GM12878 (cell line): ENCODE measurements at regions of chr1 and their contacts with region 1.

Region 1: GRCh38 chr1:68120136-68120791 is 69.8 kb upstream of the DIRAS3 start:
- DNase-seq: peak; percentile 24
- ATAC-seq: peak; percentile 81
- H3K4me3 ChIP-seq: no peak overlapping the region
- H3K27ac ChIP-seq: no peak overlapping the region
- H3K4me1 ChIP-seq: no peaks in the 10 kb centered on the region
- H3K27me3 ChIP-seq: no peaks in the 10 kb centered on the region
- CTCF ChIP-seq: peak; percentile 69 to 82 (median 75)
- EP300 ChIP-seq: no peak
- POLR2A ChIP-seq: no peak
- RAD21 ChIP-seq: peak; percentile 91

Region 2: DNA sequence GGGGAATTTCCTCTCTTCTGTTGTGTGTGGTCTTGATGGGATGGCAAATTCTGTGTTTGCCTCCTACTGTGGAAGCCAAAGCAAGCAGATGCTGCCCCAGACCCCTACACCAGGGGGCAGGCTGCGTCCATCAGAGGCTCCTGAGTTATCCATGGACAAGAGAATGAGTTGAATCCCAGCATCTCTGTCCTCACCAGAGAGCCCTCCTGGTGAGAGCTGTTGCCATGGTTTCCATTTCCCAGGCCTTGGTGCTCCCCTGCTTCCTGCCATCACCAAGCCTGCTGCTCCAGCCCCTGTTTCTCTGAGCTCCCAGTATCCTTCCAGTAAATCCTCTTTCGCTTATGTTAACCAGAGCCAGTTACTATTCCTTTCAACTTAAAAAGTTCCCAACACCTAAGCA is 266.6 kb before region 1 on chr1:
- CTCF ChIA-PET with region 1: interaction called, 29 read pairs
- POLR2A ChIA-PET with region 1: no interaction called
- RAD21 ChIA-PET with region 1: interaction called, 17 read pairs
- SMC1A ChIA-PET with region 1: interaction called, 26 read pairs
- in situ Hi-C with region 1: no loop called
- intact Hi-C with region 1: loop called (anchors 5 kb)
- DNase-seq: no peak
- ATAC-seq: peak; percentile 82
- H3K4me3 ChIP-seq: no peak overlapping the region
- H3K27ac ChIP-seq: no peak overlapping the region
- H3K4me1 ChIP-seq: no peaks in the 10 kb centered on the region
- H3K27me3 ChIP-seq: no peaks in the 10 kb centered on the region
- CTCF ChIP-seq: peak; percentile 51 to 72 (median 52)
- EP300 ChIP-seq: no peak
- POLR2A ChIP-seq: no peak
- RAD21 ChIP-seq: peak; percentile 41

Region 3: GRCh38 chr1:68141071-68142021 is 21.1 kb after region 1 on chr1:
- CTCF ChIA-PET with region 1: interaction called, 21 read pairs
- POLR2A ChIA-PET with region 1: no interaction called
- RAD21 ChIA-PET with region 1: interaction called, 3 read pairs
- SMC1A ChIA-PET with region 1: interaction called, 3 read pairs
- in situ Hi-C with region 1: no loop called
- intact Hi-C with region 1: no loop called
- DNase-seq: no peak
- ATAC-seq: no peak
- H3K4me3 ChIP-seq: no peak overlapping the region
- H3K27ac ChIP-seq: no peak overlapping the region
- H3K4me1 ChIP-seq: no peaks in the 10 kb centered on the region
- H3K27me3 ChIP-seq: peaks cover 0 to 2% of the 10 kb centered on the region in 2 experiments; a peak in 2 of 4 replicates
- CTCF ChIP-seq: no peak
- EP300 ChIP-seq: no peak
- POLR2A ChIP-seq: no peak
- RAD21 ChIP-seq: no peak

Region 4: DNA sequence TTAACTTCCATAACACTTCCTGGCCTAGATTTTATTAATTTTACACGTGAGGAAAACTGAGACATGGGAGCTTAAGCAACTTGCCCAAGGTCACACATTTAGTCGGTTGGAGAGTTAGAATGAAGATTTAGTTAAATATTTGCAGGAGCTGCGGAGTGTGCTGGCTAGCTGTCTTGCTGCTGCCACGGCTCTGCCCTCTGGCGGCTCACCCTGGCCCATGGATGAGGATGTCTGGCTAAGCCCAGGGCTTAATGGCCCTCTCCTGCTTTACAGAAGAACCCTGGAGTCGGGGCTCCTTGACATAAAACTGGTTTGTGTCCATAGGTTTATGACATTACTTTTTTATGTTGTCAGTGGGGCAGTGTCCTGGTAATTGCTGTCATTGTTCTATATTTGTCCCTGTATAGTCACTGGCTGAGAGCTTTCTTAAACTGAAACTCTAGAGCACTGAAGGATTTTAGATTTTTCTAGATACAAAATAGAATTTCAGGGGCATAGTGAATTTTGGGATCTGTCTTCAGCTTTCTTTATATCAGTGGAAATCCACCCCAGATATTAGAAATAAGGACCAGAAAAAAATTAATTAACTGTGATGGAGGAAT is 200.9 kb after region 1 on chr1:
- CTCF ChIA-PET with region 1: interaction called, 94 read pairs
- POLR2A ChIA-PET with region 1: no interaction called
- RAD21 ChIA-PET with region 1: interaction called, 43 read pairs
- SMC1A ChIA-PET with region 1: interaction called, 50 read pairs
- in situ Hi-C with region 1: no loop called
- intact Hi-C with region 1: loop called (anchors 2 kb)
- DNase-seq: no peak
- ATAC-seq: peak; percentile 93
- H3K4me3 ChIP-seq: no peak overlapping the region
- H3K27ac ChIP-seq: no peak overlapping the region
- H3K4me1 ChIP-seq: no peaks in the 10 kb centered on the region
- H3K27me3 ChIP-seq: no peaks in the 10 kb centered on the region
- CTCF ChIP-seq: peak in 2 of 3 experiments; percentile 29 to 42; a peak in 3 of 6 replicates
- EP300 ChIP-seq: no peak
- POLR2A ChIP-seq: no peak
- RAD21 ChIP-seq: no peak

Region 5: DNA sequence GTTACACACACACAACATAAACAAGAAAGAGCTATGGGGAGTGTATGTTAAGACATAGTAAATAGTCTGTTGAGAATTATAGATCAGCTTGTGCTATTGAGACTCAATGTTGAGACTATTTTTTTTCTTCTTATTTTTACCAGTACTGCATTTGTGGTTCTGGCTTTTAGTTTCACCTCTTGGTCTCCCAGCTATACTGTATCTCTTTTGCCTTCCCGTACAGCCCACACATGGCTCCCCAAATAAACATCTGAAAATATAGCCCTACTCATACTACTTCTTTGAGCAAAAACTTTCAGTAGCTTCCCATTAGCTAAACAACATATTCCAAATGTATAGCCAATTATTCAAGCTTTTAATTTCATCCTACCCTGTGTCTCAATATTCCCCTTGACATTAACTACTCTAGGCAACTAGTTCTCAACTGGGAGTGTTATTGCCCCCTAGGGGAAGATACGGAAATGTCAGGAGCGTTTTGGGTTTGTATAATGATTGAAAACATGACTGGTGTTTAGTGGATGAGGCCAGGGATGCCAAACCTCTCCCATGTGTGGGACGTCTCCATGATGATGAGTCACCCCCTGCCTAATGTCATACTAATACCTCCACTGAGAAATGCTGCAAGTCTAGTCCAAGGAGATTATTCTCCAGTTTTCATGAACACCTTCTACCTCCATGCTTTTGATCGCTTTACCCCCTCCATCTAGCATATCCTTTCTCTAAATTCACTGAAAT is 322.7 kb after region 1 on chr1:
- CTCF ChIA-PET with region 1: interaction called, 48 read pairs
- POLR2A ChIA-PET with region 1: no interaction called
- RAD21 ChIA-PET with region 1: interaction called, 23 read pairs
- SMC1A ChIA-PET with region 1: interaction called, 22 read pairs
- in situ Hi-C with region 1: loop called (anchors 5 kb)
- intact Hi-C with region 1: loop called (anchors 2 kb)
- DNase-seq: no peak
- ATAC-seq: peak; percentile 91
- H3K4me3 ChIP-seq: no peak overlapping the region
- H3K27ac ChIP-seq: no peak overlapping the region
- H3K4me1 ChIP-seq: no peaks in the 10 kb centered on the region
- H3K27me3 ChIP-seq: no peaks in the 10 kb centered on the region
- CTCF ChIP-seq: peak; percentile 56 to 69 (median 62)
- EP300 ChIP-seq: no peak
- POLR2A ChIP-seq: no peak
- RAD21 ChIP-seq: peak; percentile 61

Region 6: GRCh38 chr1:69737527-69738185 is 1617.4 kb after region 1 on chr1:
- CTCF ChIA-PET with region 1: interaction called, 20 read pairs
- POLR2A ChIA-PET with region 1: no interaction called
- RAD21 ChIA-PET with region 1: interaction called, 15 read pairs
- SMC1A ChIA-PET with region 1: interaction called, 5 read pairs
- in situ Hi-C with region 1: loop called (anchors 10 kb)
- intact Hi-C with region 1: loop called (anchors 5 kb)
- DNase-seq: peak; percentile 11
- ATAC-seq: peak; percentile 90
- H3K4me3 ChIP-seq: no peak overlapping the region
- H3K27ac ChIP-seq: no peak overlapping the region
- H3K4me1 ChIP-seq: no peaks in the 10 kb centered on the region
- H3K27me3 ChIP-seq: no peaks in the 10 kb centered on the region
- CTCF ChIP-seq: peak; percentile 60 to 66 (median 63); a peak in 5 of 6 replicates
- EP300 ChIP-seq: no peak
- POLR2A ChIP-seq: no peak
- RAD21 ChIP-seq: peak; percentile 88